ENCODE measurements at regions of chr10 and their contacts with region 1.

Region 1: DNA sequence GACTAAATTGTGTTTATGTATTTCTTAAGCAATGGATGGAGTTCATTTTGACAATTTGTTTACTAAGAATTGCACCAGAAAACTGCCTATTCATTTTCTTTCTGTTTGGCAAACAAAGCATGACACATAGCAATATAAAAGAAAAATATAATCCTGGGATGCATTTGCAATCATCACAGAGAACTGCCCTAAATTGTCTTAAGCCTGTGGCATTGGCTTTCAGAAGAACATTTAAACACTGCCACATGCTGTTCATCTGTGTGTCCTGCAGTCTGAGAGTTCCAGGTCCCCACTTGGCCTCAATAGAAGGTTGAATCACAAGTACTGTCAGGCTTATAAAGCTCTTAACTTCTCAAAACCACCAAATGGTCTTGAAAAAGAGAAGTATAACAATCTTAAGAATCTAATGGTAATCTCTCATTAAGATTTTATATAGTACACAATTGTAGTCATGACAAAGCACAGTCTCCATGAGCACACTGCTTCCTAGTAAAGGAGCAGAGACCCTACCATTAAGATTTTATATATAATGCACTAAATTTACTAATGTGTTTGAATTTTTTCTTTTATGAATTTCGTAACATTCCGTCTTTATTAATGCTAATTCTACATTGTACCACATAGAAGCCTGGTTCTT is 29.9 kb downstream of the RNLS start:
- DNase-seq: peak; percentile 83
- H3K4me3 Mint-ChIP-seq: no peak overlapping the region
- H3K27ac Mint-ChIP-seq: no peak overlapping the region
- H3K4me1 Mint-ChIP-seq: peaks cover 3% of the 10 kb centered on the region
- H3K27me3 Mint-ChIP-seq: peaks cover 9% of the 10 kb centered on the region

Region 2: GRCh38 chr10:87642988-87643387 is 910.2 kb before region 1 on chr10:
- intact Hi-C with region 1: no loop called
- DNase-seq: no peak
- H3K4me3 Mint-ChIP-seq: no peak overlapping the region
- H3K27ac Mint-ChIP-seq: no peak overlapping the region
- H3K4me1 Mint-ChIP-seq: peaks cover 5% of the 10 kb centered on the region
- H3K27me3 Mint-ChIP-seq: no peaks in the 10 kb centered on the region

Region 3: DNA sequence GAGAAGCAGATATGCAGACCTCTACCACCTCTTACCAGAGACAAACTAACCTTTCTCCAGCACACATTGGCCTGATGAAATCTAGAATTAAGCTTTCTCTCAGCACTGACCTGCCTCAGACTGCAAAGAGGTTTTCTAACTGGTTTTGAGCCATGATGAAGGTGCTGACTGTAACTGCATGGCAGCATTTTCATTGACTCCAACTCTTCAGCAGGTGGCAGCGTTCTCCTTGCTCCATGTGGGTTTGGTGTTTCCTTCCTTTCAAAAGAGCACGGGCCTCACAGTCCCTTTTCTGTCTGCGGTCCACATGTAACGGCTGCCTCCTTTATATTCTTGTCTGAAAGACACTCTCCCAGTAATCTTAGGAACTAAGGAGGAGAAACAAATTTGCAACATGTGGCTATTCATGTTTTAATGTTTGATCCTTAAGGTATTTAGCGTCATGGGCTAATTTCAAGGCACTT is 702.5 kb before region 1 on chr10:
- intact Hi-C with region 1: loop called (anchors 1 kb)
- DNase-seq: peak; percentile 86
- H3K4me3 Mint-ChIP-seq: no peak overlapping the region
- H3K27ac Mint-ChIP-seq: no peak overlapping the region
- H3K4me1 Mint-ChIP-seq: peaks cover 14% of the 10 kb centered on the region
- H3K27me3 Mint-ChIP-seq: no peaks in the 10 kb centered on the region

Region 4: DNA sequence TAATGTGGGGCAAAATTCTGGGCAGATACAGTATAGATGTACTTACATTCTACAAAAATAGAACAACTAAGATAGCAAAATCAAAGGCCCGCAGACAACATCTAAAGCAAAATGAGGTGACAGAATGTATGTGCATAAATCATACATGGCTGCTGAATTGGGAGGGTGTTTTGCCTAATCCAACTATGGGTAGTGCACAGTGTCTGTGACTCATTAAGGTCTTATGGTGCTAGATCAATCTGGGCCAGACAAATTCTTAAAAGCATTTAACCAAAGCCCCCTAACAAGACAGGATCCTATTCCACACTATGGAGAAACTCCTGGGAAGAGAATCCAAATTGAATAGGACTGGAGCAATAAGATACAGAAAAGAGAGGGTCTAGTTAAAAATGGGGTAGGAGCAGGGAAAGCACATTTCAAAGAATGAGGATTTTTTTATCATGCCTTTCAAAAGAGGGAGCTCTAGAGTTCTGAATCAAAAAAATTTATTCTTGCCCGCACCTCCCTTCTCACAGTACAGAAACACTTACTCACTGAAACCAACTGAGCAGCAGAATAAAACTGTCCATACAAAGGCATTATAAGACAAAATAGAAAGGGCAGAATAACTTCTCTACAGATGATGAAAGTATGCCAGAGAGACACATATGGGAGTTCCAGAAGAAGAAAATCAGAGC is 151.4 kb before region 1 on chr10:
- intact Hi-C with region 1: loop called (anchors 10 kb)
- DNase-seq: no peak
- H3K4me3 Mint-ChIP-seq: no peak overlapping the region
- H3K27ac Mint-ChIP-seq: no peak overlapping the region
- H3K4me1 Mint-ChIP-seq: peaks cover 4% of the 10 kb centered on the region
- H3K27me3 Mint-ChIP-seq: peaks cover 2% of the 10 kb centered on the region

Region 5: GRCh38 chr10:88473989-88474883 is 79.0 kb before region 1 on chr10:
- intact Hi-C with region 1: no loop called
- DNase-seq: no peak
- H3K4me3 Mint-ChIP-seq: no peak overlapping the region
- H3K27ac Mint-ChIP-seq: no peak overlapping the region
- H3K4me1 Mint-ChIP-seq: no peaks in the 10 kb centered on the region
- H3K27me3 Mint-ChIP-seq: peaks cover 3% of the 10 kb centered on the region

Region 6: DNA sequence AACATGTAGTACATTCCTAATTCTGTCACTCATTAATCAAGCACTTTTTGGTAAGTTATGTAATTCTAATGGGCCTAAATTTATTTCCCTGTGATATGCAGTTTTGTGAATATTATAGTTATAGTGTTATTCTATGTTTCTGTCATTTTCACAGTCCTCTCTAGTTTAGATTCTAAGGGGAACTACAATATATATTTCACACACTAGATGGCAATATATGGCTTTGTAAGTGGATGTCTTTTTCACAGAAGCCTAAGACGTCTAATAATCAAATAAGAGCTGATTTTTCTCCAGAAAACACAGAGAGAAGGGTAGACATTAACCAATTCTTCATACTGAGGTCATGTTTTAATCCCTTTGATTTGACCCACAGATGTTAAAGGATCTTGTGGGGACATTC is 11.8 kb after region 1 on chr10:
- intact Hi-C with region 1: no loop called
- DNase-seq: no peak
- H3K4me3 Mint-ChIP-seq: no peak overlapping the region
- H3K27ac Mint-ChIP-seq: no peak overlapping the region
- H3K4me1 Mint-ChIP-seq: peaks cover 2% of the 10 kb centered on the region
- H3K27me3 Mint-ChIP-seq: peaks cover 23% of the 10 kb centered on the region